ENCODE measurements at regions of chr13 and their contacts with region 1.

Region 1: GRCh38 chr13:94617389-94618000 is 15.8 kb downstream of the GPR180 start:
- DNase-seq: no peak
- H3K4me3 ChIP-seq: no peak overlapping the region
- H3K27ac ChIP-seq: no peak overlapping the region
- H3K4me1 ChIP-seq: no peaks in the 10 kb centered on the region
- H3K27me3 ChIP-seq: no peaks in the 10 kb centered on the region
- CTCF ChIP-seq: peak; percentile 26 to 70 (median 50)
- EP300 ChIP-seq: no peak
- POLR2A ChIP-seq: no peak

Region 2: DNA sequence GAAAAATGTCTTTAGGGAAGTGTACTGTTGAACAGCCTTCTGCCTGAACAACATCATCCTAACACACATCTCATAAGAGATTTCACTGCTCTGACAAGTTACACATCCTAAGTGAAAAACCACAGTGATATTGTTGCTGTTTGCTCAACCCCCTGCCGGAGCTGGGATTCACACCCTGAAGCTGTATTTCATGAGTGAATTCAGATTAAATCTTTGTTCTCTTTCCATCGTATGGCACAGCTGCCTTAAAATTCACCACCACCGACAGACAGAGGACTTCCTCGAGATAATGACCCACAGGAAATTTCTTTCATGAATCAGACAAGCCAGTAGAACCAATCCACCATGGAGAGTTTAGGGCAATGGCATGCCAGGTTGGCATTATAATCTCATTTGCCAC is 418.8 kb before region 1 on chr13:
- intact Hi-C with region 1: no loop called
- DNase-seq: no peak
- H3K4me3 ChIP-seq: no peak overlapping the region
- H3K27ac ChIP-seq: no peak overlapping the region
- H3K4me1 ChIP-seq: no peaks in the 10 kb centered on the region
- H3K27me3 ChIP-seq: no peaks in the 10 kb centered on the region
- CTCF ChIP-seq: no peak
- EP300 ChIP-seq: no peak
- POLR2A ChIP-seq: no peak

Region 3: DNA sequence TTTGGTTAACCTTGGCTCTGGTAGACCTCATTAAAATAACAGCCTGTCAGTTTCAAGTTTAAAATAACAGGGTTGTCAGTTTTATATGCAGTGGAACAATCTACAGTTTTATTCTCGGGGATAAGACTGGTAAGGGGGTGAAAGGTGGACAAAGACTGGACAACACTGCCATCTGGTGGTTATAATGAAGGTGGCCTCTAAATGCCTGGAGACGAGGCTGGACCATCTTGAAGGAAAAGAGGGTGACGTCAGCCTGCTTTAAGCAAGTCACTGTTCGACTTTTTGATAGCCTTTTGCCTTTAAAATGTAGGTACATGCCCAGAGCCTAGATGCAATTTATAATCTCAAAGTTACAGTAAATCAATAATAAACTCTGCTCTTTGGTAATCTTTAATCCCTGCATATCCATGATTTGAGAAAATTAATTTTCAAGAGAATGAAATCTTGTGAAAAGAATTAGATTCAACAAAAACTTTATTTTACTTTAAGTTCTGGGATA is 255.0 kb before region 1 on chr13:
- intact Hi-C with region 1: no loop called
- DNase-seq: peak; percentile 82
- H3K4me3 ChIP-seq: no peak overlapping the region
- H3K27ac ChIP-seq: no peak overlapping the region
- H3K4me1 ChIP-seq: peaks cover 0 to 9% (median 1%) of the 10 kb centered on the region in 4 donors
- H3K27me3 ChIP-seq: no peaks in the 10 kb centered on the region
- CTCF ChIP-seq: peak; percentile 77 to 82 (median 82)
- EP300 ChIP-seq: no peak
- POLR2A ChIP-seq: no peak

Region 4: GRCh38 chr13:94435604-94436226 is 181.8 kb before region 1 on chr13:
- intact Hi-C with region 1: loop called (anchors 2 kb)
- DNase-seq: no peak
- H3K4me3 ChIP-seq: no peak overlapping the region
- H3K27ac ChIP-seq: no peak overlapping the region
- H3K4me1 ChIP-seq: no peaks in the 10 kb centered on the region
- H3K27me3 ChIP-seq: no peaks in the 10 kb centered on the region
- CTCF ChIP-seq: peak; percentile 14 to 57 (median 48)
- EP300 ChIP-seq: no peak
- POLR2A ChIP-seq: no peak

Measured in sigmoid colon (tissue), 7 donors.